Activated naive CD8-positive, alpha-beta T cell treated with anti-CD3 and anti-CD28 coated beads, Interleukin-2, amount 10 ng/mL, durations not matched to agents 7 days and 5 days (primary cell): ENCODE measurements at regions of chr22 and their contacts with region 1.

Region 1: GRCh38 chr22:30940685-30941362 is 27.8 kb downstream of the MORC2 start:
- DNase-seq: peak; percentile 50
- ATAC-seq: peak; percentile 72
- H3K4me3 Mint-ChIP-seq: peak overlapping the region; percentile 76
- H3K27ac Mint-ChIP-seq: peak overlapping the region; percentile 95
- H3K4me1 Mint-ChIP-seq: peaks cover 46% of the 10 kb centered on the region
- H3K27me3 Mint-ChIP-seq: no peaks in the 10 kb centered on the region

Region 2: GRCh38 chr22:30920407-30920806 is 20.4 kb before region 1 on chr22:
- POLR2A ChIA-PET with region 1: interaction called, 16 read pairs
- DNase-seq: peak; percentile 87
- ATAC-seq: peak; percentile 62
- H3K4me3 Mint-ChIP-seq: peak overlapping the region; percentile 60
- H3K27ac Mint-ChIP-seq: no peak overlapping the region
- H3K4me1 Mint-ChIP-seq: peaks cover 13% of the 10 kb centered on the region
- H3K27me3 Mint-ChIP-seq: no peaks in the 10 kb centered on the region

Region 3: GRCh38 chr22:30984317-30984716 is 43.5 kb after region 1 on chr22:
- POLR2A ChIA-PET with region 1: no interaction called
- DNase-seq: no peak
- ATAC-seq: no peak
- H3K4me3 Mint-ChIP-seq: no peak overlapping the region
- H3K27ac Mint-ChIP-seq: no peak overlapping the region
- H3K4me1 Mint-ChIP-seq: peaks cover 6% of the 10 kb centered on the region
- H3K27me3 Mint-ChIP-seq: peaks cover 4% of the 10 kb centered on the region